ENCODE measurements at regions of chr19 and their contacts with region 1.

Region 1: GRCh38 chr19:16185123-16185767 is at the start of gene FAM32A:
- DNase-seq: peak; percentile 98
- H3K4me3 ChIP-seq: peak within 1 kb of the TSS; percentile 80
- H3K4me3 Mint-ChIP-seq: peak within 1 kb of the TSS; percentile 100
- H3K27ac Mint-ChIP-seq: peak within 1 kb of the TSS; percentile 99
- H3K4me1 ChIP-seq: peaks cover 22% of the 10 kb centered on the region
- H3K4me1 Mint-ChIP-seq: peaks cover 10% of the 10 kb centered on the region
- H3K27me3 ChIP-seq: no peaks in the 10 kb centered on the region
- H3K27me3 Mint-ChIP-seq: no peaks in the 10 kb centered on the region
- CTCF ChIP-seq: peak in 1 of 2 experiments; percentile 14
- total RNA-seq, gene FAM32A: 113 and 126 TPM in 2 replicates

Region 2: DNA sequence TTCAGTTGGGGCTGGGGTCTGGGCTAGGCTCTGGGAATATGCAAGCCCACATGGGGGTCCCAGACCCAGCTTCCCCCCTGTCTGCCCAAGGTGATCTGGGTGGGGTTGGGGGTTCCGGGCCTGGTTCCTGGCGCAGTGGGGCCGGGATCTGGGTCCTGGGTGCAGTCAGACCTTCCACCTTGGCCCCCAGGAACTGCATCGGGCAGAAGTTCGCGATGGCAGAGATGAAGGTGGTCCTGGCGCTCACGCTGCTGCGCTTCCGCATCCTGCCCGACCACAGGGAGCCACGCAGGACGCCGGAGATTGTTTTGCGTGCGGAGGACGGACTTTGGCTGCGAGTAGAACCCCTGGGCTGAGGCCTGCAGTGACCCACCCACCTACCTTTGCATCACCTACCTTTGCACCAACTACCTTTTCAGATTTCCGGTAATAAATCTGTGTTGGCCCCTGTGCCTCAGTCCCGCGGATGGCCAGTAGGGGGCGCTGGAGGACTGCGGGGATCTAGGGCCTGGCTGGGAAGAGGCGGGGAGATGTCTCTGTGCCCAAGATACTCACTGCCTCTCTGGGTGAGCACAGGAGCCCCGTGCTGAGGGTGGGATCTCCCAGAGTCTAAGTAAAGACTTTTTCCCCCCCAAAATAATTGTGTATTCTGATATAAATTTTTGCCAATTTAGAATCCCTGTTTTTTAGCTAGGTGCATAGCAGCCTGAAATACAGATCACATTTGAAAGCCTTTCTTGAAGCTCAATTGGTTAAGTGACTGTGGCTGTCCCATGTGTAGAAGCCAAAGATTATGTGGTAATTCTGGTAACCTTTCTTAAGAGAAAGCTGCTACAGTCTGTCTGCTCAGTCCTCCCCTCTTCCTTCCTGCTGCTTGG is 556.0 kb before region 1 on chr19:
- CTCF ChIA-PET with region 1: interaction called, 3 read pairs
- POLR2A ChIA-PET with region 1: no interaction called
- intact Hi-C with region 1: loop called (anchors 5 kb)
- DNase-seq: peak; percentile 69 to 87
- H3K4me3 ChIP-seq: 0 out of 2 replicates have a peak overlapping the region, but pooled peaks have one; percentile 10
- H3K4me3 Mint-ChIP-seq: no peak overlapping the region
- H3K27ac Mint-ChIP-seq: no peak overlapping the region
- H3K4me1 ChIP-seq: no peaks in the 10 kb centered on the region
- H3K4me1 Mint-ChIP-seq: no peaks in the 10 kb centered on the region
- H3K27me3 ChIP-seq: no peaks in the 10 kb centered on the region
- H3K27me3 Mint-ChIP-seq: no peaks in the 10 kb centered on the region
- CTCF ChIP-seq: peak; percentile 90 to 94

Region 3: GRCh38 chr19:16025108-16026101 is 159.8 kb before region 1 on chr19:
- CTCF ChIA-PET with region 1: interaction called, 19 read pairs
- POLR2A ChIA-PET with region 1: interaction called, 6 read pairs
- intact Hi-C with region 1: loop called (anchors 2 kb)
- DNase-seq: peak; percentile 68 to 70
- H3K4me3 ChIP-seq: no peak overlapping the region
- H3K4me3 Mint-ChIP-seq: no peak overlapping the region
- H3K27ac Mint-ChIP-seq: no peak overlapping the region
- H3K4me1 ChIP-seq: no peaks in the 10 kb centered on the region
- H3K4me1 Mint-ChIP-seq: no peaks in the 10 kb centered on the region
- H3K27me3 ChIP-seq: no peaks in the 10 kb centered on the region
- H3K27me3 Mint-ChIP-seq: no peaks in the 10 kb centered on the region
- CTCF ChIP-seq: peak; percentile 67 to 76

Region 4: DNA sequence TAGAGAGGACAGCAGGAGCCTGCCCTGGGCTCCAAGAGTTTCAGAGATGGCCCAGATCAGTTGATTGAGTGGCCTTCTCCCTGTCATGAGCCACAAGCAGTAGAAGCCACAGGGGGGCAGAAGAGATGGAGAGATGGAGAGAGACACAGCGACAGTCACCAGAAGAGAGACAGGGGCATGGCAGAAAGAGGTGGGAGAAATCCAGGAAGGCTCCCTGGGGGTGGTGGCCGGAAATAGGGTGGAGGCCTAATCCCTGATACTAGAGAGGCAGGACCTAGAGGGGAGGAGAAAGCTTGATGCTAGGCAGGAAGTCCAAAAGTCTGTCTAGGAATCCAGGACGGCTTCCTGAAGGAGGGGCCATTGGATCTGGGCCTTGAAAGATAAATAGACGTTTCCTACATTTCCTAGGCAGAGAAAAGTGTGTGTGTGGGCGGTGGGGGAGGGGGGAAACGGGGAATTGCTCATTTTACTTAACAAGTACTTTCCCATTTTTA is 118.6 kb before region 1 on chr19:
- CTCF ChIA-PET with region 1: interaction called, 3 read pairs
- POLR2A ChIA-PET with region 1: no interaction called
- intact Hi-C with region 1: loop called (anchors 1 kb)
- DNase-seq: peak; percentile 70 to 75
- H3K4me3 ChIP-seq: no peak overlapping the region
- H3K4me3 Mint-ChIP-seq: no peak overlapping the region
- H3K27ac Mint-ChIP-seq: peak overlapping the region; percentile 65
- H3K4me1 ChIP-seq: 0 out of 2 replicates have a peak, but pooled peaks cover 4% of the 10 kb centered on the region
- H3K4me1 Mint-ChIP-seq: peaks cover 7% of the 10 kb centered on the region
- H3K27me3 ChIP-seq: no peaks in the 10 kb centered on the region
- H3K27me3 Mint-ChIP-seq: no peaks in the 10 kb centered on the region
- CTCF ChIP-seq: peak in 1 of 2 experiments; percentile 44

Region 5: DNA sequence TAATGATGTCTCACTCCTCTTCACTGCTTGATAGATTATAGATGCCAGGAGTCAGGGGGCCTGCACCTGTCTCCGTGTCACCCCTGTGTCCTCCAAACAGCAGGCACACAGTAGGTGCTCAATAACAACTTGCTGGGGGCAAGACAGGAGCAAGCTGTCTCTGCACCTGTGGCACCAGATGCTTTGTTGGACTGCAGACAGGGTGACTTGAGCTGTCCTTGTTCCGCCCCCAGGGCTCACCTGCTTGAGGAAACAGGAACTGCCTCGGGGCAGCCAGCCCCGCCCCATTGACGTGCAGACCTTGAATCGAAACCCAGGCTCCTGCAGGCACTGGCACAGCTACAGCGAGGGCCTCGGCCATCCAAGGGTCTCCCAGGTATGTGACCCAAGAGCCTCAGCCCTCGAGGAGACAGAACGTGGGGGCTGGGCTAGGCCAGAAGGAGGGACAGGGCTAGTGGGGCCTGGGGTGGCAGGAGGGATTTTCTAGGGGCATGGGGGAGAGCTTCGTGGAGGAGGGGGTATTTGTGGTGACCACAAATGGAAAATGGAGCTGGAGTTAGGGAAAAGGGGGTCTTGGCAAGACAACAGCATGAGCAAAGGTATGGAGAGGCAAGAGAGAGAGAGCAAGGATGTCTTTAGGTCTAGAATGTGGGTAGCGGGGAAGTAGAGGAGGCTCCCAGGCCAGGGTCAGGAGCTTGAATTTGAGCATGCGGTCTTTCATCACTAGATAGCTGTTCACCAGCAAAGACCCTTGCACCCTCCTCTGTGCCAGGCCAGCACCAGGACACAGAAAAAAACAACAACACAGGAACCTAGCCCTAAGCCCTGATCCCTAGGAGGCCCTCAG is 41.6 kb before region 1 on chr19 and contains the start of gene HSH2D:
- CTCF ChIA-PET with region 1: interaction called, 3 read pairs
- POLR2A ChIA-PET with region 1: interaction called, 14 read pairs
- intact Hi-C with region 1: no loop called
- DNase-seq: peak; percentile 41 to 73
- H3K4me3 ChIP-seq: no peak within 1 kb of the TSS
- H3K4me3 Mint-ChIP-seq: no peak within 1 kb of the TSS
- H3K27ac Mint-ChIP-seq: peak within 1 kb of the TSS; percentile 28
- H3K4me1 ChIP-seq: peaks cover 5% of the 10 kb centered on the region; the same call in 1 of the 2 replicates
- H3K4me1 Mint-ChIP-seq: peaks cover 14% of the 10 kb centered on the region
- H3K27me3 ChIP-seq: no peaks in the 10 kb centered on the region
- H3K27me3 Mint-ChIP-seq: no peaks in the 10 kb centered on the region
- CTCF ChIP-seq: no peak
- total RNA-seq, gene HSH2D: 0.23 and 0.35 TPM in 2 replicates

Measured in Caco-2 (cell line).